Activated T-helper 1 cell treated with anti-CD3 and anti-CD28 coated beads, Interleukin-12 subunit alpha, Interleukin-12 subunit beta, Interleukin-2, Interleukin-4 antibody, amounts not matched to agents 30 ng/mL and 10 ng/mL and 1 ng/mL, durations not matched to agents 14 hours and 24 hours and 36 hours (primary cell): ENCODE measurements at regions of chr3 and their contacts with region 1.

Region 1: GRCh38 chr3:12484198-12484974 is at the start of gene TSEN2:
- DNase-seq: peak; percentile 97
- H3K4me3 Mint-ChIP-seq: peak within 1 kb of the TSS; percentile 100
- H3K27ac Mint-ChIP-seq: peak within 1 kb of the TSS; percentile 98
- H3K4me1 Mint-ChIP-seq: peaks cover 40% of the 10 kb centered on the region
- H3K27me3 Mint-ChIP-seq: no peaks in the 10 kb centered on the region
- total RNA-seq, gene TSEN2: 33.4 and 33.5 TPM in 2 replicates

Region 2: GRCh38 chr3:11271986-11272904 is 1212.1 kb before region 1 on chr3 and contains the start of gene ATG7:
- intact Hi-C with region 1: loop called (anchors 10 kb)
- DNase-seq: peak; percentile 96
- H3K4me3 Mint-ChIP-seq: peak within 1 kb of the TSS; percentile 90
- H3K27ac Mint-ChIP-seq: peak within 1 kb of the TSS; percentile 90
- H3K4me1 Mint-ChIP-seq: peaks cover 45% of the 10 kb centered on the region
- H3K27me3 Mint-ChIP-seq: peaks cover 3% of the 10 kb centered on the region
- total RNA-seq, gene ATG7: 38.6 and 44.0 TPM in 2 replicates

Region 3: GRCh38 chr3:12004741-12005513 is 479.5 kb before region 1 on chr3:
- intact Hi-C with region 1: loop called (anchors 10 kb)
- DNase-seq: no peak
- H3K4me3 Mint-ChIP-seq: no peak overlapping the region
- H3K27ac Mint-ChIP-seq: no peak overlapping the region
- H3K4me1 Mint-ChIP-seq: no peaks in the 10 kb centered on the region
- H3K27me3 Mint-ChIP-seq: peaks cover 46% of the 10 kb centered on the region

Region 4: GRCh38 chr3:12308517-12308916 is 175.9 kb before region 1 on chr3:
- intact Hi-C with region 1: loop called (anchors 5 kb)
- DNase-seq: no peak
- H3K4me3 Mint-ChIP-seq: no peak overlapping the region
- H3K27ac Mint-ChIP-seq: no peak overlapping the region
- H3K4me1 Mint-ChIP-seq: no peaks in the 10 kb centered on the region
- H3K27me3 Mint-ChIP-seq: peaks cover 12% of the 10 kb centered on the region

Region 5: GRCh38 chr3:12708584-12709192 is 224.3 kb after region 1 on chr3:
- intact Hi-C with region 1: no loop called
- DNase-seq: no peak
- H3K4me3 Mint-ChIP-seq: no peak overlapping the region
- H3K27ac Mint-ChIP-seq: no peak overlapping the region
- H3K4me1 Mint-ChIP-seq: no peaks in the 10 kb centered on the region
- H3K27me3 Mint-ChIP-seq: peaks cover 11% of the 10 kb centered on the region

Region 6: DNA sequence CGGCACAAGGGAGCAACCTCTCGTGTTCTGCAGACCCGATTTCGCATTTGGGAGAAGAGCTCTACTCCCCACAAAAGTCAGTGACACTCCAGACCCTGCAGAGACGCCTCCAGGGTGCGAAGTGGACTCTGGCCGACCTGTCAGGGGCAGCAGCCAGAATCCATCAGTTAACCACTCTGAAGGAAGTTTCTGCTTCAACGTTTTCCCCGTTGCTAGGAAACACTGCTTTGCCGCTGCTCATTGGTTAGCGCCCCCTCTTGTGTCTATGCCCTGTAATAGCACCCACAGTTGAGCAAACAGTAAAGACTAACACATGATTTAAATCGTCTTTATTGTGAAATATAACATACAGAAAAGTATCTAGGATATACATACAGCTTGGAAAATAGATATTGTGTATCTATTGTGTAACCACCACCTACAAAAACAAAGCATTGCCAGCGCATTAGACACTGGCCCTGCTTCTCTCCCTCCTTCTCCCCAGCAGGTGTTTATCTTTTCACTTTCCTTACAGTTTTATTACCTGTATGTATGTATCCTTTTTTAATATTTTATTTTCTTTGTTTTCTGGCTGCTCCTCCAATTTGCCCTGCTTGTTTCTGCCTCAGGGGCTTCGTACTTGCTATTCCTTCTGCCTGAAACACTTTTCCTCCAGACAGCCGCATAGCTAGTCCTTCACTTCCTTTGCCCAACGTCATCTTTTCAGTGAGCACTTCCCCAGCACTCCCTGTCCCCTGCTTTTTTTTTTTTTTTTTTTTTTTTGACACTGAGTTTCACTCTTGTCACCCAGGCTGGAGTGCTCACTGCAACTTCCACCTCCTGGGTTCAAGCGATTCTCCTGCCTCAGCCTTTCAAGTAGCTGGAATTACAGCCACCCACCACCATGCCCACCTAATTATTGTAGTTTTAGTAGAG is 235.9 kb after region 1 on chr3:
- intact Hi-C with region 1: loop called (anchors 1 kb)
- DNase-seq: peak; percentile 66
- H3K4me3 Mint-ChIP-seq: no peak overlapping the region
- H3K27ac Mint-ChIP-seq: peak overlapping the region; percentile 41
- H3K4me1 Mint-ChIP-seq: peaks cover 9% of the 10 kb centered on the region
- H3K27me3 Mint-ChIP-seq: peaks cover 5% of the 10 kb centered on the region

Region 7: GRCh38 chr3:13012228-13012691 is 527.9 kb after region 1 on chr3:
- intact Hi-C with region 1: loop called (anchors 10 kb)
- DNase-seq: peak; percentile 43
- H3K4me3 Mint-ChIP-seq: peak overlapping the region; percentile 80
- H3K27ac Mint-ChIP-seq: peak overlapping the region; percentile 99
- H3K4me1 Mint-ChIP-seq: peaks cover 85% of the 10 kb centered on the region
- H3K27me3 Mint-ChIP-seq: no peaks in the 10 kb centered on the region